ENCODE measurements at regions of chr4 and their contacts with region 1.

Region 1: DNA sequence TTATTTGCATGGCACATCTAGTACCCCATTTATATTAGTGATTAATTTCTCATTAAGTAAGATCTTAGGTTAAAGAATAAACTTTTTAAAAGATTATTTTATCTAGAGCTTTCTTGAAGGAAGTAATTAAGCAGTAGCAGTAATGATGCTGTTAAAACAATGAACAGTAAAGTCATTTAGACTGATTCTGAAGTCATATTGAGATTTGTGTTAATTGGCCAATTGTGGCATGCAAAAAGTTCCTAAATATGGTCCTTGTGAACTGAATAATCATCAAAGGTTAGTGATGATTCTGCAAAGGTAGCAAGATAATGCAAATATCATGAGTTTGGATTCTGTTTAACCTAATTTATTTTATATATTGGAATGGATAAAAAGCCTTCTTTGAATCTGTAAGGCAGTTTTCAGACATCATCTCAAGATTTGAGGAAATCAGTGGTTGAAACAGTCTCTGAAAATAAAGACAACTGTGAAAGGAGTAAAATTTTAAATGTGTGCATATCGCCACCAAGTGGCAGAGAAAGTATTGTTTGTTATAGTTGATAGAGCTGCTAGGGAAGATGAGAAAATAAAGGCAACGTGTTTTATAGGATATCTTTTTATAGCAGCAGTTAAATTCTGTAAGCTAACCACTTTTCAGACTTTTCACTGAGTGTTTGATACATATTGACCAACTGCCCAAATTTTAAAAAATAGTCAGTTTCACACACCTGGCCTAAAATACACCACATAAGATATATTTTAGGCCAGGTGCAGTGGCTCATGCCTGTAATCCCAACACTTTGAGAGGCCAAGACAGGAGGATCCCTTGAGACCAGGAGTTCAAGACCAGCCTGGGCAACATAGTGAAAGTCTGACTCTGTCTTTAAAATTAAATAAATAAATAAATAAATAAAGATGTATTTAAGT is 79.6 kb downstream of the CCKAR start:
- DNase-seq: no peak

Region 2: GRCh38 chr4:25986807-25987206 is 423.8 kb before region 1 on chr4:
- intact Hi-C with region 1: loop called (anchors 5 kb)
- DNase-seq: no peak

Region 3: DNA sequence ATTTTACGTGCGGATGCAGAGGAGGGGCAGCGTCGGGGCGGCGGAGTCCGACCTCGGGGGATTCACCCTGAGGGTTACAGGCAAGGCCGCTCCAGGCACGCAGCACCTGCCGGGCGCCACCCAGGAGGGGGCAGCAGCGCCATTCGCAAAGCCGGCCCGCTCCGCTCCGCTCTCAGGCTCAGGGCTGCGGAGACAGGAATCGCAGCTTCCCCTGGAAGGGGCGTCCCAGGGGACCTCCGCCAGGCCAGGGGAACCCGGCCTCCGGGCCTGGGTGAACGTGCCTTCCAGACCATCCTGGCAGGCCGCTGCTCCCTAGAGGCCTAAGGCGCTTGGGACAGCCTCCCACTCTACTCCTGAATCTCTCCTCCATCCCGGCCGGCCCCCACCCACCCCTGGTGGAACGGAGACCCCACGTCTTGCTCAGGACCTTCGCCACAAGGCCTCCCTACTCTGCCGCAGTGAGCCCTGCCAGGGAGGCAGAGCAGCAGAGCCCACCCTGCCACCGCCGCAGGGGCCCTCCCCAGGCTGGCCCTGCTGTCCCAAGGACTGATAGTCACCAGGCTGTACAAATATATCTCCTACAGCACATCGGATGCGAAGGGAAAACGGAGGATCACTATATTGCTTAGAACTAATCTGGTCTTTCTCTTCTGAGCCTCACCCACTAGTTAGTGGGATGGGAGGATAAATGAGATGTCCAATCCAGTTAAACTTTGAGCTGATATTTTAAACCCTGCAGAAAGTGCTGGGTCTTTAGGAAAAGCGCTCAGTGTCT is 381.7 kb before region 1 on chr4:
- intact Hi-C with region 1: loop called (anchors 5 kb)
- DNase-seq: peak; percentile 87

Region 4: DNA sequence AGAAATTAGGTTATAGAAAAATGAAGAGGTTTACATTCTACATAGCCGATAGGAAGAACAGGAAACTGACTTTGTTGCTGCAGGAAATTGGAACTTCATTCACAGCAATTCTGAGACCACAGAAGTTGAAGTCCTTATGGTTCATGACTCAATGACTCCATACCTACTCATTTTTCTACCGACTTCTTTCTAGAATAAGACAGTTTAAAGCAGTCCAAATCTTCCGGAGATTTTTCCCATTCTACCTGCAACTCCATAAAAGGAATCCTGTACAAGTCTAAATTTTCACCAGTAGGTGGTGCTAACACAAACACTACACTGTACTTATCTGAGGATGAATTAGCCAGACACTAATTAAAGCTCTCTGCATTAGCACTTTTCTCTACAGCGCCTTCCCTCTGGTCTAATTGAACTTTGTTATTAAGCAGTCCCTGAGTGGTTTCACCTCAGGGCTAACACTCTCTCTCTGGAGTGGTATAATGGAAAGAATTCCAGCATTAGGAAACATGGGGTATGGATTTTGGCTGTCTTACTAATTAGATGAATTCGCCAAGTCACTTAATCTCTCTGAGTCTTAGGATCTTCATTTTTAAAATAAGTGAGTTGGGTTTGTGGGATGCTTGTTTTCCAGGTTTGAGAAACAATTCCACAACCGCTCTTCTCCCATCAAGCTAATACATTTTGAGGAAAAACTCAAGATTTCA is 328.7 kb before region 1 on chr4:
- intact Hi-C with region 1: loop called (anchors 2 kb)
- DNase-seq: no peak

Region 5: GRCh38 chr4:26330186-26330787 is 80.4 kb before region 1 on chr4:
- intact Hi-C with region 1: loop called (anchors 2 kb)
- DNase-seq: no peak

Measured in cardiac septum (tissue), 1 donor.